Head of caudate nucleus (tissue), 42 donors: ENCODE measurements at regions of chr3 and their contacts with region 1.

Region 1: GRCh38 chr3:194333212-194333980 is 17.7 kb downstream of the CPN2 start:
- DNase-seq: peak; percentile 80 to 96 (median 92)

Region 2: DNA sequence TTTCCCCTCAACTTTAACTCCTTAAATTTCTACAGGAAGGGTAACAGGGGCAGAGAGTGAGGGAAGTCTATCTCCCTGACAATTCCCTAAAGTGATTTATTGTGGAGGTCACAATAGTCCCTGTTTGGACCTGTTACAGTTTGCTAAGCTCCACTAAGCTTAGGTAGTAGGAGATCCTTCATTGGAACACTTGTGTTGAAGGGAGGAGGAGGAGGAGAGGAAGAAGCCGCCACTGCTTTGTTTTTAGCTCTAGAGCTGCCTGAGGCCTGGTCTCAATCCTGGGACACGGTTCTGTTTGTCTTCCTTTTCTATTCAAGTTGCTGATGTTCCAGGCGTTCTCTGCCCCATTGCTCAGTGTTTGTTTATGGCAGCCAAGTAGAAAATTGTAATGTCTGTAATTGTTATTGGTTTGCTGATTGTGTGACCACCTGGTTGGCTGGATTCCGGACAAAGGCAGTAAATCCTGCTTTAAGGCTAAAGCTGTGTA is 149.1 kb before region 1 on chr3:
- intact Hi-C with region 1: no loop called
- DNase-seq: no peak

Region 3: DNA sequence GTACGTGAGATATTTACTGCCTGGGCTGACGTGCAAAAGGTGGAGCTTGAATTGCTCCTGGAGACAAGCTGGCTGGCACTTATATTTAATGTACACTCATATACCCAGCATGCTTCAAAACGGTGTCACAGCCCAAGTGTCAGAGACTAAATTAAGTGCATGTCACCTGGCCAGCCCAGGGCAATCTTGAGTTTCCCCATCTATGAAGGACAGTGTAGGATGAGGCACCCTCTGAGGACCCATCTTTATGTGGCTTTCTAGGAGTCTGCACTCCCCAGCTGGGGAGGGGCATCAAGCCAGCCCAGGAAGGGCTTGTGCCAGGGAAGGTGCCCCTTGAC is 30.9 kb after region 1 on chr3:
- intact Hi-C with region 1: no loop called
- DNase-seq: no peak

Region 4: DNA sequence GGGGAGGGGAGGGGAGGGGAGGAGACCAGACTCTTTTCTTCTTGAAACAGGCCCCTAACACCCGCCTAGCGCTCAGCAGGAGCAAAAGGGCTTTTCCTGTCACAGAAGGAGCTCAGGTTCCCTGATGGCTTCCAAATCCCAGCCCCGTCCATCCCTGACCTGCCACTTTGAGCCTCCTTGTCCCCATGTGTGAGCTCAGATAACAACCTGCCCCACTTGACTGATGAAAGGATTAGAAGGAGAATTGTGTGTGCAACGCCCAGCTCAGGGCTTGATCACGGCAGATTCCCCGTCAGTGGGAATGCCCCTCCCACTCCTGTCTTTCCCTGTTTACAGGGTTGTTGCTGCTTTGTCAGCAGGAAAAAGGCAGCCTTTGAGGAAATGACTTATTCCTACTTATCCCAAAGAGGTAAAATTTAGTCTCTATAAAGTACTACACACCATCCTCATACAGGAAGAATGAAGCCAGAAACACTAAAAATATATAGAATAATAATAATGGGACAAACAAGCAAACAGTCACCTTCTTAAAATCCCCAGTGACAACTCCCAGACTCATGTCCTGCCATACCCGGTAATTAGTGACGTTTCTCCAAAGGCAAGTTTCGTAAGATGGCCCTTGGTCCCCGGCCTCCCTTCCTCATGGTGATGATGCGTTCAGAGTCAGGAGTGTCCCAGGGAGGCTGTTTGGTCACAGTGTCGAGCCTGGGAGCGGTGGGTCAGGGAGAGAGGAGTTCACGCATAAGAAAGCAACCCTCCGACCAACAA is 42.3 kb after region 1 on chr3:
- intact Hi-C with region 1: no loop called
- DNase-seq: no peak

Region 5: GRCh38 chr3:194404365-194405140 is 71.2 kb after region 1 on chr3:
- intact Hi-C with region 1: loop called (anchors 2 kb)
- DNase-seq: peak in 22 of 42 donors; percentile 25 to 82 (median 63)

Region 6: DNA sequence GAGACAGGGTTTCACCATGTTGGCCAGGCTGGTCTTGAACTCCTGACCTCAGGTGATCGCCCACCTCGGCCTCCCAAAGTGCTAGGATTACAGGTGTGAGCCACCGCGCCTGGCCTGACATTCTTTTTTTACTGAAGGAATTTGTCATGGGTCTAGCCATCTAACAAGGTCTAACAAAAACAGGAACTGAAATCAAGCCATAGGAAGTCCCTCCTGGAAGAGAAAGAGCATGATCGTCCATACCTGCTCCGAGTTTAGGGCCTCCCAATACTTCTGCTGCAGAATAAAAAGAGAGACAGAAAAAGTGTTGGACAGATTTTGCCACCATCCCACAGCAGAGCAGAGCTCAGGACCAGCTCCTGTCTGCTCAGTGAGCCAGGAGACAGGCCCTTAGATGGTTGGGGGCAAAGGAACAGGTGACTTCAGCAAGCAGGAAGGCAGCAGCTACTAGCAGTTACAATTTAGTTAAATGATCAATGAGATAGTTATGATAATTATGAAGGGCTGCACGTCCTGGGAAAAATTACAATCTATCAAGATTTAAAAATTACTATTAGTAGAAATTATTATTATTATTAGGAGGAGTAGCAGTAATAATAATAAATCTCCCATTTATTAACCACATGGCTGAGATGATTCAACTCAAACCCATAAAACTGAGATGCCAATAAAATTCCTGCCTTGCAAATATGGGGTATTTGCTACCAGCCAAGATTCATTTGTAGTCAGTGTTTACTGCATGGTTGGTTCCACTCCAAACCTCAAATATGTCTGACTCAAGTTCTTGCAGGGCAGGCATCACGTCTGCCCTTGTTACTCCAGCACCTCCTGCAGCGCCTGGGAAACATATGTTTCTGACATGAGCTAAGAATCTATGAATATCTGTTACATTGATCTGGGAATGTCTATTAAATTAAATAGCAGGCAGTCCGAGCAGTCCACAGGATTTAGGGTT is 259.7 kb after region 1 on chr3:
- intact Hi-C with region 1: loop called (anchors 10 kb)
- DNase-seq: no peak